HEK293 (cell line): ENCODE measurements at regions of chr9 and their contacts with region 1.

Region 1: GRCh38 chr9:125374443-125375309 is 113.0 kb downstream of the GAPVD1 start:
- H3K4me3 ChIP-seq: no peak overlapping the region
- H3K27ac ChIP-seq: no peak overlapping the region
- H3K4me1 ChIP-seq: no peaks in the 10 kb centered on the region
- CTCF ChIP-seq: peak; percentile 89

Region 2: GRCh38 chr9:125099816-125100215 is 274.9 kb before region 1 on chr9:
- CTCF ChIA-PET with region 1: no interaction called
- POLR2A ChIA-PET with region 1: no interaction called
- H3K4me3 ChIP-seq: no peak overlapping the region
- H3K27ac ChIP-seq: no peak overlapping the region
- H3K4me1 ChIP-seq: no peaks in the 10 kb centered on the region
- CTCF ChIP-seq: no peak

Region 3: GRCh38 chr9:125361837-125362531 is 12.7 kb before region 1 on chr9:
- CTCF ChIA-PET with region 1: interaction called, 20 read pairs
- POLR2A ChIA-PET with region 1: no interaction called
- H3K4me3 ChIP-seq: no peak overlapping the region
- H3K27ac ChIP-seq: no peak overlapping the region
- H3K4me1 ChIP-seq: no peaks in the 10 kb centered on the region
- CTCF ChIP-seq: no peak